Mammary epithelial cell (primary cell): ENCODE measurements at regions of chr4 and their contacts with region 1.

Region 1: DNA sequence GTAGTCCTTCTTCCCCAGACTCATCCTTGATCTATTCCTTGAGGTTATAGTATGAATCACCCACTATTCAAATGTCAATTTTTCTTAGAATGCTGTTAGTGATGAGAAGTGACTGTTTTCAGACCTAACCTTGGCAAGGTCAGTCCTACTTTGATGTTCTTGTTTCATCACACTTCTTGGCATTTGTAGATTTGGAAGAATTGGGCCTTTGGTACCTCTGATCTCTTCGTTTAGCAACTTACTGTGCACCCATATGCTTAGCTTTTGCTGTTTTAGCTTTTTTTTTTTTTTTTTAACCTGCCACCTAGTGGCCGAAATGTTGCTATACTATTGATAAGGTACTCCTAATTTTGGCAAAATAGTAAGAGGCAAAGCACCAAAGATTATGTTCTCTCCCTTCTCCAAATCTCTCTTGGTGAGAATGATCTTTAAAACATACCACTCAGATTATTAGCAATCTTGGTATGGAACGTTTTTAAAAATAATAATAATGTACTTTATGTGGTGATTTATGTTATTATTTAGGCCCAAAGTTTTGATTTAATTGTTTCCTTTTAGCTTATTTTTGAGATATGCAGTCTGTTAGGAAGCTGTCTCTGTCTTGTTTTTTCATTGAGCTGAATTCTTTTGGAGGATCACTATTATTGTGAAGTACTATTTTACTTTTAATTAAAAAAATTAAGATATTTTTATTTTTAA is 16.6 kb downstream of the DCK start:
- DNase-seq: peak; percentile 41
- H3K4me3 ChIP-seq: no peak overlapping the region
- H3K27ac ChIP-seq: no peak overlapping the region
- H3K4me1 ChIP-seq: peaks cover 3% of the 10 kb centered on the region
- H3K27me3 ChIP-seq: no peaks in the 10 kb centered on the region
- CTCF ChIP-seq: peak; percentile 63 to 64

Region 2: DNA sequence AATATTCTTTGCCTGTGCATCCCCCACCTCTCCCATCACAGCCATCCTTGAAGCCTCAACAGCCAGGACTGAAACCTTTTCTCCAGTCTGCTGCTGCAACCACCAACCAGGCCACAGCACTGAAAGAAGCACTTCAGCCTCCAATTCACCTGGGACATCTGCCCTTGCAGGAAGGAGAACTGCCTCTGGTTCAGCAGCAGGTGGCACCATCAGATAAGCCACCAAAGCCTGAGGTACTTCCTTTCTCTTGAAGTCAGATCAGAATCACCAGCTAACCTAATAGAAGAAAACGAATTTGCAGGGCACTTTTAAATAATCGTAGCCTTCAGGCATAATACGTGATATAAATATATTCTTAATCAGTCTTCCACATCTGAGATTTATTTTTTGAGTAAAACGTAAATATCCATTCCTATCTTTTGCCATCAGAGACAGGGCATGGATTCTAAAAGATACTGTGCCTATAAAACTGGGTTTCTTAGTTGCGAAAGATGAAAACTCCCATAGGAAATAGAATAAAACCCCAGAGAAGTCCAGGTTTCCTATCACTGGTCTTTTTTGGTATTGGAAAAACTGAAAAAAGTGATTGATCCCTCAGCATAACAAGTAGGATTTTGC is 408.5 kb before region 1 on chr4:
- CTCF ChIA-PET with region 1: no interaction called
- dilution Hi-C with region 1: no loop called
- in situ Hi-C with region 1: no loop called
- intact Hi-C with region 1: loop called (anchors 1 kb)
- DNase-seq: peak; percentile 54
- H3K4me3 ChIP-seq: no peak overlapping the region
- H3K27ac ChIP-seq: no peak overlapping the region
- H3K4me1 ChIP-seq: no peaks in the 10 kb centered on the region
- H3K27me3 ChIP-seq: no peaks in the 10 kb centered on the region
- CTCF ChIP-seq: peak; percentile 77 to 89

Region 3: GRCh38 chr4:70651864-70652506 is 358.1 kb before region 1 on chr4:
- CTCF ChIA-PET with region 1: interaction called, 4 read pairs
- dilution Hi-C with region 1: no loop called
- in situ Hi-C with region 1: loop called in 1 of 2 experiments (anchors 25 kb)
- intact Hi-C with region 1: loop called (anchors 1 kb)
- DNase-seq: peak; percentile 29
- H3K4me3 ChIP-seq: no peak overlapping the region
- H3K27ac ChIP-seq: no peak overlapping the region
- H3K4me1 ChIP-seq: no peaks in the 10 kb centered on the region
- H3K27me3 ChIP-seq: no peaks in the 10 kb centered on the region
- CTCF ChIP-seq: peak; percentile 51 to 56

Region 4: DNA sequence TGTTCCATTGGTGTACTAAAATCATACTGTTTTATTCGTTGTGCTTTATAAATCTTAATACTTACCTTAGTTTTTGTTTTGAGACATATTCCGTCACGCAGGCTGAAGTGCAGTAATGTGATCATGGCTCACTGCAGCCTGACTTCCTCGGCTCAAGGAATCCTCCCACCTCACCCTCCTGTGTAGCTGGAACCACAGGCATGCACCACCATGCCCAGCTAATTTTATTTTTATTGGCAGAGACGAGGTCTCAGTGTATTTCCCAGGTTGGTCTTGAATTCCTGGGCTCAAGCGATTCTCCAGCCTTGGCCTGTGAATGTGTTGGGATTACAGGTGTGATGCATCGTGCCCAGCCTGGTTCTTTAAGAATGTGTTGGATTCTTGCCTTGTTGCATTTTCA is 41.0 kb before region 1 on chr4:
- CTCF ChIA-PET with region 1: no interaction called
- dilution Hi-C with region 1: no loop called
- in situ Hi-C with region 1: no loop called
- intact Hi-C with region 1: no loop called
- DNase-seq: peak; percentile 73
- H3K4me3 ChIP-seq: no peak overlapping the region
- H3K27ac ChIP-seq: no peak overlapping the region
- H3K4me1 ChIP-seq: peaks cover 7% of the 10 kb centered on the region
- H3K27me3 ChIP-seq: no peaks in the 10 kb centered on the region
- CTCF ChIP-seq: no peak